T-cell (primary cell): ENCODE measurements at regions of chr12 and their contacts with region 1.

Region 1: GRCh38 chr12:95487024-95487423 is 13.1 kb downstream of the METAP2 start:
- DNase-seq: no peak
- ATAC-seq: no peak
- H3K4me3 ChIP-seq: no peak overlapping the region
- H3K4me3 Mint-ChIP-seq: no peak overlapping the region
- H3K27ac ChIP-seq: no peak overlapping the region
- H3K27ac Mint-ChIP-seq: no peak overlapping the region
- H3K4me1 ChIP-seq: no peaks in the 10 kb centered on the region
- H3K4me1 Mint-ChIP-seq: peaks cover 12 to 17% (median 14%) of the 10 kb centered on the region in 3 donors
- H3K27me3 ChIP-seq: no peaks in the 10 kb centered on the region
- H3K27me3 Mint-ChIP-seq: no peaks in the 10 kb centered on the region

Region 2: DNA sequence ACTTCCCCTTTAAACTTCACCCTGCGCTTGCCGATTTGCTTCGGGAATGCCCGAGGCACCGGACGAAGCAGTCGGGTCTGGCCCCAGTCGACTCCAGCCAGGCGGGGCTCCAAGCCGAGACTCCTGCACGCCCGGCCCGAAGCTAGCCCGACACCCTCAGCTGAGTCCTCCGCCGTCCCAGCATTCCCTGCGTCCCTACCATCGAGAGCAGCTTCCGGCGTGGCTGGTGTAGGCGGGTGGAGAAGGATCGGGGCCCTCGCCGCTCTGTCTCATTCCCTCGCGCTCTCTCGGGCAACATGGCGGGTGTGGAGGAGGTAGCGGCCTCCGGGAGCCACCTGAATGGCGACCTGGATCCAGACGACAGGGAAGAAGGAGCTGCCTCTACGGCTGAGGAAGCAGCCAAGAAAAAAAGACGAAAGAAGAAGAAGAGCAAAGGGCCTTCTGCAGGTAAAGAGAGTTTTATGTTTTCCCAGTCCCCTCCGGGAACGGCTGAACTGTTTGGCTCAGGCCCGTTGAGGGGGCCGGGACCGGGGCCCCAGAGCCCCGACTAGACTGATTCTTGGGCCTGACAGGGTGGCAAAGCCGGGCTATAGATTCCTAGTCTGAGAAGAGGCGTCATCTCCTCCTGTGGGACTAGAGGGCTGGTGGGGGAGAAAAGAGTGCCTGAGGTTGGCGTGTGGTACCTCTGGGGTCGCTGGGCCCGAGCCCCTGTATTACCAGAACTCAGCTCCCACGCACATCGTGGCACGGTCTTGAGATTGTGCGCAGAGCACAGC is 13.0 kb before region 1 on chr12 and contains the start of gene METAP2:
- CTCF ChIA-PET with region 1: interaction called, 3 to 15 read pairs
- POLR2A ChIA-PET with region 1: interaction called, 3 to 5 read pairs
- DNase-seq: peak; percentile 80 to 92 (median 86)
- ATAC-seq: peak; percentile 97 to 99 (median 98)
- H3K4me3 ChIP-seq: peak within 1 kb of the TSS; percentile 67 to 81
- H3K4me3 Mint-ChIP-seq: peak within 1 kb of the TSS; percentile 96 to 100 (median 100)
- H3K27ac ChIP-seq: peak within 1 kb of the TSS; percentile 67
- H3K27ac Mint-ChIP-seq: peak within 1 kb of the TSS; percentile 99 to 100
- H3K4me1 ChIP-seq: peaks cover 15 to 26% of the 10 kb centered on the region in 2 experiments
- H3K4me1 Mint-ChIP-seq: peaks cover 55 to 62% (median 55%) of the 10 kb centered on the region in 3 donors
- H3K27me3 ChIP-seq: no peaks in the 10 kb centered on the region
- H3K27me3 Mint-ChIP-seq: no peaks in the 10 kb centered on the region
- total RNA-seq, gene METAP2: 47.7 to 55.6 (median 51.4) TPM

Region 3: DNA sequence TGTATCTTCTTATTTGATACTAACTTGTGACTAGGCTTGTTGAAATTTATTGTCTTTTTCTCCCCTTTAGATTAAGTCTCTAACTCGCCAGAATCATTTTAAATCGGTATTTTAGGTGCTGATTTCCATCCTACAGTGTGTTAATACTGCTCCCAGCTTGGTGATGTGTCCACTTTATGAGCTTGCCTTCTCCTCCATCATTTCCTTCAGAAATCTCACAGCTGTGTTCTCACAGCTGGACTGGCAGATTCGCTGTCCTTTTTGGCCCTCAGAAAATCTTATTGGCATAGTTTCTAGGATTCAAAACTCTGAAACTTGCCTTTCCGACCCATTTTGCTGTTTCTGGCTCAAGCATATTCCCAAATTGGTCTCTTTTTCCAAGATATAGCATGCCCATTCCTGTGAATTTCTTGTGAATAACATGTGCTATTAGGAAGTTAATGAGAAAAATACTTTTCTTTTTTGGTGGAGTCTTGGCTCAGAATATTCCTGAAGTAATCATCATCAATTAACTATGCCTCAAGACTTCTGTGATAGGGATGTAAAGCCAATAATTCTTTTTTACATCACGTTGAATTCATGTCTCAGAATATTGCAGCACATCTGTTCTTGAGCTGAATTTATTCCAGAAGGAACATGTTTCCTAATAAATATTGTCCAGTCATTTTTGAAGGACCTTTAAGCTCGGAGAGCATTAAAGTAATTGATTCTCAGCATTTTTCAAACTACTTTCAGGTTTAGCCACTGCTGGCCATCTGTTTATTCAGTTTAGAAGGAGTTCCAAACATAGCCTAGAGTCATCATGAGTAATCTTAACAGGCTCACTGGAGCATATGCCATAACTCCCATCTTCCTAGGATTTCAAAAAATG is 114.3 kb after region 1 on chr12:
- CTCF ChIA-PET with region 1: no interaction called
- POLR2A ChIA-PET with region 1: no interaction called
- DNase-seq: no peak
- ATAC-seq: no peak
- H3K4me3 ChIP-seq: no peak overlapping the region
- H3K4me3 Mint-ChIP-seq: no peak overlapping the region
- H3K27ac ChIP-seq: no peak overlapping the region
- H3K27ac Mint-ChIP-seq: no peak overlapping the region
- H3K4me1 ChIP-seq: no peaks in the 10 kb centered on the region
- H3K4me1 Mint-ChIP-seq: no peaks in the 10 kb centered on the region
- H3K27me3 ChIP-seq: peaks cover 0 to 4% of the 10 kb centered on the region in 2 experiments
- H3K27me3 Mint-ChIP-seq: peaks cover 0 to 4% of the 10 kb centered on the region in 2 donors